Motor neuron (in vitro differentiated cells): ENCODE measurements at regions of chr19 and their contacts with region 1.

Region 1: GRCh38 chr19:47243776-47244547 is 12.4 kb upstream of the CCDC9 start:
- ATAC-seq: peak; percentile 66 to 86 (median 72)
- H3K4me3 ChIP-seq: peak overlapping the region; percentile 29 to 39 (median 32)
- H3K27ac ChIP-seq: peak overlapping the region; percentile 88 to 95
- H3K4me1 ChIP-seq: peaks cover 26 to 28% of the 10 kb centered on the region in 2 donors

Region 2: GRCh38 chr19:47130591-47131227 is 113.3 kb before region 1 on chr19 and contains the start of gene SAE1:
- in situ Hi-C with region 1: loop called in 1 of 9 experiments (anchors 25 kb)
- ATAC-seq: peak; percentile 82 to 92 (median 89)
- H3K4me3 ChIP-seq: peak within 1 kb of the TSS; percentile 48 to 92 (median 79)
- H3K27ac ChIP-seq: peak within 1 kb of the TSS; percentile 72 to 92
- H3K4me1 ChIP-seq: peaks cover 15 to 19% of the 10 kb centered on the region in 2 donors
- total RNA-seq, gene SAE1: 76.2 to 197 (median 91.7) TPM

Region 3: GRCh38 chr19:47582320-47582909 is 338.5 kb after region 1 on chr19:
- in situ Hi-C with region 1: no loop called
- ATAC-seq: no peak
- H3K4me3 ChIP-seq: no peak overlapping the region
- H3K27ac ChIP-seq: no peak overlapping the region
- H3K4me1 ChIP-seq: no peaks in the 10 kb centered on the region